ENCODE measurements at regions of chr6 and their contacts with region 1.

Region 1: DNA sequence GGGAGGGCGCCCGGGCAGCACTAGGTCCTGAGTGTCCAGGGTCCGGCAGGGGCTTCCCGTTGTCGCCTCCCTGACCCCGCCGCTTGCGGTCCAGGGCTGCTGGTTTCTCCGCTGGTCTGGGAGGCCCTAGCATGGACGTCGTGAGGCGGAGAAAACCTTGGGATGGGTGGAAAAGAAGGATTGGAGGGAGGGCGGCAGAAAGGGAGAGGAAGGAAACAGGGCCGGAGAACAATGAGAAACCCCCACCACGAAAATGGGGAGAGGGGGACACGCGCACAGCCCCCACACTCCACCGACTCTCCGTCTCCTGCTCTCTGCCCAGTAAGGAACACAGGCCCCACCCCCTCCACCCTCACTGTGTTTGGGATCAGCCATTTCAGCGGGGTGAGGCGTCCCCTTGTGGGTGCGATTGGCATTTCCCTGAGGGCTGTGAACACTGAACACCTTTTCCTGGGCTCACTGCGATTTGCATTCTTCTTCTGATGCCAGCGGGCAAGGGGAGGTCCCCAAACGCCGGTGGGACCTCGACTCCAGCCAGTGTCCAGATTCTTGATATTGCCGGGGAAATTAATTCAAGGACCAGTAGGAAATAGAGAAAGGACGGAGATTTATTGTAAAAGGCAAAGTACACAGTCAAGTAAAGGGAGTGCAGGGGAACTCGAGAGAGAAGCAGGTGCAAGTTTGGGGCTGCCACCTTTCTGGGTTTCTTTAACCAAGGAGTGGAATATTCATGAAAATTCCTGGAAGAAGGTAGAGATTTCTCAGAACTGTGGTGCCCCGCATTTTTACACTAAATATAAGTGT is 3.3 kb upstream of the RAET1G start:
- DNase-seq: peak; percentile 81 to 84
- ATAC-seq: peak; percentile 87 to 97
- H3K4me3 ChIP-seq: peak overlapping the region; percentile 53 to 67 (median 58)
- H3K27ac ChIP-seq: peak overlapping the region in 3 of 4 donors; percentile 7 to 53 (median 21)
- H3K4me1 ChIP-seq: peaks cover 15 to 18% of the 10 kb centered on the region in 2 donors
- H3K27me3 ChIP-seq: peaks cover 0 to 16% (median 9%) of the 10 kb centered on the region in 3 donors
- CTCF ChIP-seq: peak; percentile 92 to 98 (median 96)
- POLR2A ChIP-seq: no peak

Region 2: DNA sequence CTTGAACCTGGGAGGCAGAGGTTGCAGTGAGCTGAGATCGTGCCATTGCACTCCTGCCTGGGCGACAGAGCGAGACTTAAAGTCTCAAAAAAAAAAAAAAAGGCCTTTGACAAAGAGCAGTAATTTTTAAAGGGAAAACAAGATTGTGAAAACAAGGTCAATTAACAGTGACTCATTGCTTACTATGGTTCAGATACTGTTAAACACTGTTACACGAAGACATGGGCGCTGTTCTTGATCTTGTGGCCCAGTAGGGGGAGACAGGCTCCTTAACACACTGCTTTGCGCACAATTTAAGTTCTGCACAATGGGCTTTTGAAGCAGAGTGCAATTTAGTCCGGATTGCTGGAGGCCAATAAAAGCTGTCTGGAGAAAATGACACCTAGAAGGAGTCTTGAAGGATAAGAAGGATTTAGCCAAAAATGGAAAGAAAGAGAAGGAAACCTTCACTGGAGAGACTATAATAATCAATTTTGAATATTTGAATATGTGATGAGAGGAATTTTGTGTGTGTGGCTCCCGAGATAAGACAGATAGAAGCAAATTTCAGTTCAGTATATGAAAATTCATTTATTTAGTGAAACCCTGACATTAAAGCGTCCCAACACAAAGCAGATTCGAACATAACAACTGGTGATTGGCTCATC is 202.3 kb before region 1 on chr6:
- in situ Hi-C with region 1: no loop called
- intact Hi-C with region 1: loop called (anchors 10 kb)
- DNase-seq: peak in 1 of 2 donors; percentile 22
- ATAC-seq: peak in 1 of 2 donors; percentile 46
- H3K4me3 ChIP-seq: no peak overlapping the region
- H3K27ac ChIP-seq: no peak overlapping the region
- H3K4me1 ChIP-seq: no peaks in the 10 kb centered on the region
- H3K27me3 ChIP-seq: no peaks in the 10 kb centered on the region
- CTCF ChIP-seq: peak in 2 of 5 experiments; percentile 48 to 66
- POLR2A ChIP-seq: no peak

Region 3: DNA sequence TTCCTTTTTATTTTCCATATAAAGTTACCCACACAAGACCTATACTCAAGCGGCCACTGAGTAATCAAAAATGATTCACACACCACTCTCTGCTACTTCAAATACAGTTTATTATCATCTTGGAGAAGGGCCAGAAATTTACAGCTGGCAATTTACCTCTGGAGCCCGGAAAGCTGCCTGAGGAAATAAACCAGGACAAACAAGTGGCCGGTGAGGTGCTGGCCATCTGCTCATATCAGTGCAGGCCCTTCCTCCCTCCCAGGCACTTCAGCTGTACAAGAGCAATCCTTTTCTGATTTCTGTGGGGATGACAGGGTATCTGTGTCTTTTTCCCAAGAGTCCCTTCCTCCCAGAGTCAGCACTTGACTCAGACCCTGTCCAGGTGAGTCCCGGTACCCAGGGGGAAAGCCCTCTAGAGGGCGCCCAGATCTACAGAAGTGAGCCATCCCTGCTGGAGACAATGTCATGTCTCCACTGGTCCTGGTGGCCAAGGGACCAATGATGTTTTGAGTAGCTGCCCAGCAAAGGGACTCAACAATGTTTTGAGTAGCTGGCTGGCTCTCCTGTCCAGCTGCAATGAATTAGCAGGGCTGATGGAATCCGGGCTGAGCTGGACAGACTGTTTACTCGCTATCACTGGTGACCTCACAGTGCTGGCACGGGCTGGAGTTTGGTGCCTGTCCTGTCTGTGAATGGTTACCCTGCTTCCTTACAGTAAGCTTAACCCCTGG is 85.7 kb before region 1 on chr6:
- in situ Hi-C with region 1: loop called in 3 of 4 experiments (anchors 5 to 10 kb)
- intact Hi-C with region 1: loop called (anchors 1 kb)
- DNase-seq: peak; percentile 68 to 81
- ATAC-seq: peak; percentile 87 to 94
- H3K4me3 ChIP-seq: no peak overlapping the region
- H3K27ac ChIP-seq: peak overlapping the region in 1 of 4 donors; percentile 17
- H3K4me1 ChIP-seq: peaks cover 6 to 9% of the 10 kb centered on the region in 2 donors
- H3K27me3 ChIP-seq: no peaks in the 10 kb centered on the region
- CTCF ChIP-seq: peak; percentile 38 to 78 (median 68)
- POLR2A ChIP-seq: no peak

Region 4: GRCh38 chr6:149863697-149864577 is 62.2 kb before region 1 on chr6 and contains the start of gene LRP11:
- in situ Hi-C with region 1: no loop called
- intact Hi-C with region 1: loop called (anchors 1 kb)
- DNase-seq: peak; percentile 77 to 84
- ATAC-seq: peak; percentile 79
- H3K4me3 ChIP-seq: peak within 1 kb of the TSS; percentile 61 to 89 (median 72)
- H3K27ac ChIP-seq: peak within 1 kb of the TSS; percentile 87 to 96 (median 94)
- H3K4me1 ChIP-seq: peaks cover 15 to 26% of the 10 kb centered on the region in 2 donors
- H3K27me3 ChIP-seq: no peaks in the 10 kb centered on the region
- CTCF ChIP-seq: peak in 1 of 5 experiments; percentile 19
- POLR2A ChIP-seq: peak; percentile 90 to 93
- total RNA-seq, gene LRP11: 5.5 to 19.8 (median 6.1) TPM

Measured in gastrocnemius medialis (tissue), 4 donors.